CD14-positive monocyte (primary cell): ENCODE measurements at regions of chr11 and their contacts with region 1.

Region 1: DNA sequence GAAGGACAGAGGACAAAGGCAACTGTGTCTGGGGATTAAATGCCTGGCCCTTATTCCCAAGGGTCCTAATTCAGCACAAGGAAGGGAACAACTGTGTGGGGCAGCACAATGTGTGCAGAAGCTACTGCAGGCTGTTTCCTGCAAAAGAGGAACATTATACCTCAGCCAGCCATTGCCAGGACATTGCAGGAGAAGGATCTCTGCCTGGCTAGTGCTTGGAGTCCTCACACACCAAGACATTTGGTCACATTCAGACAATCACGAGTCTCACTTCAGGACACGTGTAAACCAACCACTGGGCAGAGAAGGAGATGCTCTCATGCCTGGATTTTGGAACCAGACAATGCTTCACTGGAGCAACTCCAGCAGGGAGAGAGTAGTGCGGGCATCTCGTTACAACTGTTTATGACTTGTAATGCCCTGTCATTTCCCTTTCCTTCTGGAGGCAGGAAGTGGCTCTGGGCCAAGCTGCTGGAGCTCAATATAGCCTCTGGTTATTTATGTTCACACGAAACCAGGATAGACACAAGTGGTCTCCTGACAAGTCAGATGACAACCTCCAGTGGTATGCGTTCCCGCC is 23.9 kb upstream of the ZC3H12C start:
- DNase-seq: peak; percentile 86 to 92 (median 87)
- H3K4me3 ChIP-seq: peak overlapping the region in 2 of 3 experiments; percentile 34 to 68
- H3K4me3 Mint-ChIP-seq: peak overlapping the region; percentile 65 to 90
- H3K27ac ChIP-seq: peak overlapping the region; percentile 79 to 93
- H3K27ac Mint-ChIP-seq: peak overlapping the region; percentile 91 to 96 (median 94)
- H3K4me1 ChIP-seq: peaks cover 35 to 36% of the 10 kb centered on the region in 2 donors
- H3K4me1 Mint-ChIP-seq: peaks cover 47% of the 10 kb centered on the region
- H3K27me3 ChIP-seq: no peaks in the 10 kb centered on the region
- H3K27me3 Mint-ChIP-seq: peaks cover 0 to 8% (median 5%) of the 10 kb centered on the region in 3 donors
- CTCF ChIP-seq: no peak

Region 2: GRCh38 chr11:110026858-110027626 is 42.2 kb before region 1 on chr11:
- intact Hi-C with region 1: loop called (anchors 5 kb)
- DNase-seq: peak; percentile 84 to 98 (median 90)
- H3K4me3 ChIP-seq: peak overlapping the region in 1 of 3 experiments; percentile 17
- H3K4me3 Mint-ChIP-seq: no peak overlapping the region
- H3K27ac ChIP-seq: peak overlapping the region in 1 of 2 donors; percentile 83
- H3K27ac Mint-ChIP-seq: peak overlapping the region; percentile 77 to 90 (median 84)
- H3K4me1 ChIP-seq: peaks cover 16 to 22% of the 10 kb centered on the region in 2 donors
- H3K4me1 Mint-ChIP-seq: peaks cover 20% of the 10 kb centered on the region
- H3K27me3 ChIP-seq: no peaks in the 10 kb centered on the region
- H3K27me3 Mint-ChIP-seq: no peaks in the 10 kb centered on the region
- CTCF ChIP-seq: no peak

Region 3: GRCh38 chr11:110032259-110032658 is 37.0 kb before region 1 on chr11:
- intact Hi-C with region 1: loop called (anchors 5 kb)
- DNase-seq: no peak
- H3K4me3 ChIP-seq: no peak overlapping the region
- H3K4me3 Mint-ChIP-seq: no peak overlapping the region
- H3K27ac ChIP-seq: no peak overlapping the region
- H3K27ac Mint-ChIP-seq: peak overlapping the region in 1 of 7 donors; percentile 5
- H3K4me1 ChIP-seq: peaks cover 8% of the 10 kb centered on the region in 2 donors
- H3K4me1 Mint-ChIP-seq: peaks cover 8% of the 10 kb centered on the region
- H3K27me3 ChIP-seq: no peaks in the 10 kb centered on the region
- H3K27me3 Mint-ChIP-seq: peaks cover 0 to 1% (median 0%) of the 10 kb centered on the region in 3 donors
- CTCF ChIP-seq: no peak

Region 4: GRCh38 chr11:110092515-110093404 is 23.5 kb after region 1 on chr11 and contains the start of gene ZC3H12C:
- intact Hi-C with region 1: loop called in 1 of 2 experiments (anchors 2 kb)
- DNase-seq: peak; percentile 87 to 96 (median 91)
- H3K4me3 ChIP-seq: peak within 1 kb of the TSS; percentile 59 to 81 (median 65)
- H3K4me3 Mint-ChIP-seq: peak within 1 kb of the TSS; percentile 93 to 97
- H3K27ac ChIP-seq: peak within 1 kb of the TSS; percentile 74 to 83
- H3K27ac Mint-ChIP-seq: peak within 1 kb of the TSS; percentile 79 to 95 (median 92)
- H3K4me1 ChIP-seq: peaks cover 17 to 19% of the 10 kb centered on the region in 2 donors
- H3K4me1 Mint-ChIP-seq: peaks cover 31% of the 10 kb centered on the region
- H3K27me3 ChIP-seq: no peaks in the 10 kb centered on the region
- H3K27me3 Mint-ChIP-seq: peaks cover 4 to 12% (median 10%) of the 10 kb centered on the region in 3 donors
- CTCF ChIP-seq: no peak
- polyA plus RNA-seq, gene ZC3H12C: 0.47 to 2.6 (median 0.73) TPM